Caco-2 (cell line): ENCODE measurements at regions of chr12 and their contacts with region 1.

Region 1: GRCh38 chr12:2812290-2813213 is at the start of gene ITFG2:
- DNase-seq: peak; percentile 99 to 100
- H3K4me3 ChIP-seq: peak within 1 kb of the TSS; percentile 76
- H3K4me3 Mint-ChIP-seq: peak within 1 kb of the TSS; percentile 91
- H3K27ac Mint-ChIP-seq: peak within 1 kb of the TSS; percentile 96
- H3K4me1 ChIP-seq: peaks cover 8% of the 10 kb centered on the region; the same call in 1 of the 2 replicates
- H3K4me1 Mint-ChIP-seq: peaks cover 6% of the 10 kb centered on the region
- H3K27me3 ChIP-seq: no peaks in the 10 kb centered on the region
- H3K27me3 Mint-ChIP-seq: no peaks in the 10 kb centered on the region
- CTCF ChIP-seq: no peak
- total RNA-seq, gene ITFG2: 52.6 and 58.5 TPM in 2 replicates

Region 2: DNA sequence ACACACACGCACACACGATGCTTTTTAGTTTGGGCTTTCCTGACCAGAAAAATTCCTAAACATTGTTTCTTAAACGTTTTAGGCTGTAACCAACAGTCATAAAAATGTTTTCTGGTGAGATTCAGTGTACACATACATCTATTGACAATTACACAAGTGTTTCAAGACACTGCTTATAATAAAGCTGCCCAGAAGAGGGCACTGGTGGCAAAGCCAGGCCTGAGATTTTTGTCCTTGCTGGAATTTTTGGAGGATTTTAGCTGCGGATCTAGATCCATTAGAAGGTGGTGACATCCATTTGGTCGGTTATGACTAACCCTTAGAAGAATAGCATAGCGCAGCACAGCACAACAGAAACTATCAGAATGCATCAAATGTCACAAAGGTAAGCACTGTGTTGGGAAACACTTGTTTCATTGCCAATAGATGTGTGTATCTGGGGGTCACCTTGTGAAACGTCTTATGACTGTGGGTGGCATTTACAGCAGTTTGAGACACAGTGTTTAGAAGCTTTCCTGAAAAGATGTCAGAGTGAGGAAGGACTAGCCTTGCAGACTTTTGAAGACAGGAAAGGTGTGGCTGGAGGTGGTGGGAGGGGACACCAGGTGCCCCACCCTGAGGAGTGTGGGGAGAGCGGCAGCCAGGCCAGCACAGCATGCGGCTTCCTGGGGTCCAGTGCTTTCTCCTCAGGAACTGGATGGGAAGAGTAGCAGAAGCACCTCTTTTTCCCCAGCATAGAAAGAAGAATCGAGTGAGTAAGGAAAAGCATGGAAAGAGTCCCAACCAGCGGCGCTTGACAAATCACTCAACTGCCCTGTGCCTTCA is 72.5 kb before region 1 on chr12:
- CTCF ChIA-PET with region 1: interaction called, 7 read pairs
- POLR2A ChIA-PET with region 1: interaction called, 5 read pairs
- intact Hi-C with region 1: loop called (anchors 1 kb)
- DNase-seq: peak in 1 of 2 experiments; percentile 64
- H3K4me3 ChIP-seq: no peak overlapping the region
- H3K4me3 Mint-ChIP-seq: no peak overlapping the region
- H3K27ac Mint-ChIP-seq: no peak overlapping the region
- H3K4me1 ChIP-seq: no peaks in the 10 kb centered on the region
- H3K4me1 Mint-ChIP-seq: no peaks in the 10 kb centered on the region
- H3K27me3 ChIP-seq: peaks cover 1% of the 10 kb centered on the region
- H3K27me3 Mint-ChIP-seq: peaks cover 29% of the 10 kb centered on the region
- CTCF ChIP-seq: peak; percentile 78 to 82

Region 3: DNA sequence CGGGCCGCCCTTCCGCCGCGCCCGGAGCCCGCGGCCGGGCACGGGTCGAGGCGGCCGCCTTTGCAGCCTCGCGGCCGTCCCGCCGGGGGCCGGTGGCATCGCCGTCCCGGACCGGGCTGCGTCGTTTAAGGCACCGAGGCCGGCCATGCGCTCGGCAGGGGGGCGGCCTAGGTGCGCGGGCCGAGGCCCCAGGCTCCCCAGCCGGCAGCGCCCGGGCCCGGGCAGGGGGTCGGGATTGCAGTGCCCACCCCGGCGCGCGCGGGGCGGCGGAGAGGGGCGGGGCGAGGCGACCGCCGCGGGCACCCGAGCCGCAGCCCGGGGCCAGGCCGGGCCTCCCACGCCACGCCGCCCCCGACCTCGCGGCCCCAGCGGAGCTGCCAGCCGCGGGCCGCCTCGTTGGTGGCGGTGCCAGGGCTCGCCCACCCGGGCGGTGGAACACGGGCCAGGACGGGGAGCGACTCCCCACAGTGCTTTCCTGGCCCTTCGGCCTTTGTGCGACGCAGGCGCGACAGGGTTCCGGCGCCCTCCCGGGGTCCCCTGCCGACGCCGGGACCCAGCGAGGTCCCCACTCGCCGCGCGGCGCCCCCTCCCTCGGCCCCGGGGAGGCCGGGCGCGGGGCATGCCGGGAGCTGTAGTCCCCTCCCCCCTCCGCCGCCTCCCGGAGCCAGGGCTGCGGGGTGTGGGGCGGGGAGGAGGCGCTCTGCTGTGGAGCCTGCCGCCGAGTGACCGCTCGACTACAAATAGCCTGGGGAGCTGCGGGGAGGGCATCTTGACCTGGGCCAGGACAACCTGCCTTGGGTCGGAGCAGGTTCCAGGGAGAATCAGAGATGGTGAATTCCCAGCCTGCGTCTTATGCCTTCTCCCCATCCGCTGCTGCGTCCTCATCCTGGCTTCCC is 17.0 kb before region 1 on chr12:
- CTCF ChIA-PET with region 1: interaction called, 11 read pairs
- POLR2A ChIA-PET with region 1: interaction called, 8 read pairs
- intact Hi-C with region 1: loop called (anchors 1 kb)
- DNase-seq: peak; percentile 81 to 88
- H3K4me3 ChIP-seq: peak overlapping the region; percentile 81
- H3K4me3 Mint-ChIP-seq: peak overlapping the region; percentile 89
- H3K27ac Mint-ChIP-seq: peak overlapping the region; percentile 84
- H3K4me1 ChIP-seq: peaks cover 15% of the 10 kb centered on the region
- H3K4me1 Mint-ChIP-seq: peaks cover 16% of the 10 kb centered on the region
- H3K27me3 ChIP-seq: no peaks in the 10 kb centered on the region
- H3K27me3 Mint-ChIP-seq: no peaks in the 10 kb centered on the region
- CTCF ChIP-seq: no peak

Region 4: DNA sequence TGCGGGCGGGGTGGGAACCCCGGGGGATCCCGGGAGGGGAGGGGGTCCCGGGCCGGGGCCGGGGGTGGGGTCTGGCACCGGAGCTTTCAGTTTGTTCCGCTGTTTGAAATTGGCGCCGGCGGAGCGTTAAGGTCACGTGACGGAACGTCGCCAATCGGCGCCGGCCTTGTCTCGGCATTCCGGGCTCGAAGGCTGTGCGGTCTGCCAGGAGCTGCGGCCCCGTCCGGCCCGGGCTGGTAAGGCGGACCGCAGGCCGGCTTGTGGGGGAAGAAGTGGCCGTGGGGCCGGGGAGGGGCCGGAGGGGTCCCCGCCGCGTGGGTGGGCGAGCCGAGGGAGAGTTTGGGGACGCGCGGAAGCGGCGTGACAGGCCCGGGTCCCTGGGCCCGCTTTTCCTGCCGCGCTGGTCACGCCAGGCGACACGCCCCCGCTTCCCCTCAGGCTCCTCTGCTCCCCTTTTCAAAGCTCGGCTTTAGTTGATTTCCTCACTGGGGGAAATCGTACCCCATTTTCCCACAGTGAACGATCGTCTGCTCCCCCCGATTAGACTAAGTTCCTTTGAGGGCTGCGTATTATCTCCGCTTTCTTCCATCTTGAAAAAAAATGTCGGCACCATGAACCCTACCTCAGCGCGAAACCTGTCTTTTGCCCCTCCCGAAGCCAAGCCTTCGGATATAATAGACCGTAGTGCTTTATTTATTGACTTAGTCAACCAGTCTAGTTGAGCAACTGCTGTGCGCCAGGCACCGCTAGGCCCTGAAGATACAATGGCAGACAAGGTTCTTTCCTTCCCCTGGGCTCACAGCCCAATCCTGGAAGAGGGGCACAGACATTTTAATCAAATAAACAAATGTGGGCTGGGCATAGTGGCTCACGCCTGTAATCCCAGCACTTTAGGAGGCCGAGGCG is 64.7 kb after region 1 on chr12 and contains the starts of genes FOXM1 and RHNO1:
- CTCF ChIA-PET with region 1: interaction called, 3 read pairs
- POLR2A ChIA-PET with region 1: interaction called, 3 read pairs
- intact Hi-C with region 1: loop called (anchors 2 kb)
- DNase-seq: peak; percentile 94 to 97
- H3K4me3 ChIP-seq: peak within 1 kb of the TSS; percentile 96
- H3K4me3 Mint-ChIP-seq: peak within 1 kb of the TSS; percentile 75
- H3K27ac Mint-ChIP-seq: peak within 1 kb of the TSS; percentile 99
- H3K4me1 ChIP-seq: peaks cover 28% of the 10 kb centered on the region
- H3K4me1 Mint-ChIP-seq: peaks cover 31% of the 10 kb centered on the region
- H3K27me3 ChIP-seq: no peaks in the 10 kb centered on the region
- H3K27me3 Mint-ChIP-seq: no peaks in the 10 kb centered on the region
- CTCF ChIP-seq: peak in 1 of 2 experiments; percentile 28
- total RNA-seq, gene FOXM1: 217 and 222 TPM in 2 replicates
- total RNA-seq, gene RHNO1: 99.1 and 99.8 TPM in 2 replicates

Region 5: GRCh38 chr12:2890388-2891239 is 78.1 kb after region 1 on chr12 and contains the start of gene TULP3:
- CTCF ChIA-PET with region 1: no interaction called
- POLR2A ChIA-PET with region 1: no interaction called
- intact Hi-C with region 1: loop called (anchors 2 kb)
- DNase-seq: peak; percentile 100
- H3K4me3 ChIP-seq: peak within 1 kb of the TSS; percentile 91
- H3K4me3 Mint-ChIP-seq: peak within 1 kb of the TSS; percentile 82
- H3K27ac Mint-ChIP-seq: peak within 1 kb of the TSS; percentile 91
- H3K4me1 ChIP-seq: peaks cover 18% of the 10 kb centered on the region
- H3K4me1 Mint-ChIP-seq: peaks cover 15% of the 10 kb centered on the region
- H3K27me3 ChIP-seq: no peaks in the 10 kb centered on the region
- H3K27me3 Mint-ChIP-seq: no peaks in the 10 kb centered on the region
- CTCF ChIP-seq: peak in 1 of 2 experiments; percentile 18
- total RNA-seq, gene TULP3: 31.0 and 31.7 TPM in 2 replicates

Region 6: DNA sequence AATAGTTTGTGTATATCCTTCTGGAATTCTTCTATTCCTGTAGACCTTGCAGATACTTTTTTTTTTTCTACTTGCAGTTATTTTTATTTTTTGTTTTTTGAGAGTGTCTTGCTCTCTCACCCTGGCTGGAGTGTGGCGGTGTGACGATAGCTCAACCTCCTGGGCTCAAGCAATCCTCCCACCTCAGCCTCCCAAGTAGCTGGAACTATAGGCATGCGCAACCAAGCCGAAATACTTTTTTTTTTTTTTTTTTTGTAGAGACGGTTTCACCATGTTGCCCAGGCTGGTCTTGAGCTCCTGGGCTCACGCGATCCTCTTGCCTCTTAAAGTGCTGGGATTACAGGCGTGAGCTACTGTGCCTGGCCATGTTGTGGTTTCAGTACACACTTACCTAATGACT is 88.1 kb after region 1 on chr12:
- CTCF ChIA-PET with region 1: no interaction called
- POLR2A ChIA-PET with region 1: interaction called, 10 read pairs
- intact Hi-C with region 1: no loop called
- DNase-seq: no peak
- H3K4me3 ChIP-seq: no peak overlapping the region
- H3K4me3 Mint-ChIP-seq: no peak overlapping the region
- H3K27ac Mint-ChIP-seq: no peak overlapping the region
- H3K4me1 ChIP-seq: no peaks in the 10 kb centered on the region
- H3K4me1 Mint-ChIP-seq: no peaks in the 10 kb centered on the region
- H3K27me3 ChIP-seq: no peaks in the 10 kb centered on the region
- H3K27me3 Mint-ChIP-seq: no peaks in the 10 kb centered on the region
- CTCF ChIP-seq: no peak

Region 7: GRCh38 chr12:2959505-2960389 is 147.2 kb after region 1 on chr12:
- CTCF ChIA-PET with region 1: no interaction called
- POLR2A ChIA-PET with region 1: no interaction called
- intact Hi-C with region 1: loop called (anchors 1 kb)
- DNase-seq: peak; percentile 79 to 81
- H3K4me3 ChIP-seq: peak overlapping the region; percentile 94
- H3K4me3 Mint-ChIP-seq: peak overlapping the region; percentile 87
- H3K27ac Mint-ChIP-seq: peak overlapping the region; percentile 89
- H3K4me1 ChIP-seq: peaks cover 36% of the 10 kb centered on the region
- H3K4me1 Mint-ChIP-seq: peaks cover 46% of the 10 kb centered on the region
- H3K27me3 ChIP-seq: no peaks in the 10 kb centered on the region
- H3K27me3 Mint-ChIP-seq: no peaks in the 10 kb centered on the region
- CTCF ChIP-seq: no peak